ENCODE measurements at regions of chr20 and their contacts with region 1.

Region 1: GRCh38 chr20:58447511-58448391 is 58.7 kb downstream of the VAPB start:
- DNase-seq: peak; percentile 57
- H3K4me3 Mint-ChIP-seq: no peak overlapping the region
- H3K27ac Mint-ChIP-seq: no peak overlapping the region
- H3K4me1 Mint-ChIP-seq: peaks cover 2% of the 10 kb centered on the region
- H3K27me3 Mint-ChIP-seq: no peaks in the 10 kb centered on the region

Region 2: DNA sequence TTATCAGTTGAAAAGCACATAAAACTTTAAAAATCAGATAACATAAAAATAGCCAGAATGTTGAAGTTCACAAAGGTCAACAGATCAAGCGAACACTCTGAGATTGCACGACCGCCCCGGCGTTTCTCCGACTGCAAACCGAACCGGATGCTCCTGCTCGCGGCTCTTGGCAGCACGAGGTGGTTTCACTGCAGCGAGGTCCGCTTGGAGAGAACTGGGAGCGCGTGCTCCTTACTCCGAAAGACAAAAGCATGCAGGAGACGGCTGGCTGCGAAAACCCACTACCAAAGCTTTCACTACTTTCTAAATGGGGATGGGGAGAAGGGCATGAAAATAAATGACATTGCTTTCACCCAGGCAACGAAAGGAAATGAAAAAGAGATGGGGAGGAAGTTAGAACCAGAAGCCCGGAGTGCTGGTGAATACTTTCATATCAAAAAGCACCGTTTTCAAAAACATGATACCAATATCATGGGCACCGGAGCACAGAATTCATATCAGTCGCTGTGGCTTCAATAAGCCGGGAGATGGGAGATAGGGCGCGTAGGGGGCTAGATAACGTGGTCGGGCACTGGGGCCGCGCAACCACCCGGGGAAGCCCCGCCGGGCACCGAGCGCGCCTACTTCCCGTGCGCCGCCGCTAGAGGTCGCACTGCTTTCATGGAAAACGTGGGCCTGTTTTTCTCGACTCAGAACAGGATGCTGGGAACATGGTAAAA is 211.0 kb before region 1 on chr20:
- CTCF ChIA-PET with region 1: interaction called, 10 read pairs
- POLR2A ChIA-PET with region 1: interaction called, 4 read pairs
- DNase-seq: peak; percentile 84
- H3K4me3 Mint-ChIP-seq: peak overlapping the region; percentile 79
- H3K27ac Mint-ChIP-seq: peak overlapping the region; percentile 63
- H3K4me1 Mint-ChIP-seq: peaks cover 30% of the 10 kb centered on the region
- H3K27me3 Mint-ChIP-seq: peaks cover 4% of the 10 kb centered on the region

Region 3: DNA sequence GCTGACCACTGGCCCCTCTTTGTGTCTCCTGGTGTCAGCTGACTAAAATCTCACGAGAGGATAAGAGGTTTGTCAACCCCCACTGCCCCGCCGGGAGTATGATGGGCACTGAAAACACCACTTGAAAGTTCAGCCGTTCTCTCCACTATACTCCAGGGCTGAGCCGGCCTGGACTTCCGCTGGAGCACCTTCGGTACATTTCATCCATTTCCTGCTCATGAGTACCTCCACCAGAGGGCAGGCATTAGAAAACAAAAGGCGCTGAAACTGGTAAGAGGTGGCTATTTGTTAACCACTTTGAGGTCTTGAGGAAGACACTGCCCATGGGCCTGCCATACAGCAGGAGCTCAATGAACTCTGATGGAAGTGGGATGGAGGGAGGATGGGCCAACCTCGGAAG is 201.4 kb before region 1 on chr20:
- CTCF ChIA-PET with region 1: interaction called, 10 read pairs
- POLR2A ChIA-PET with region 1: no interaction called
- DNase-seq: no peak
- H3K4me3 Mint-ChIP-seq: no peak overlapping the region
- H3K27ac Mint-ChIP-seq: no peak overlapping the region
- H3K4me1 Mint-ChIP-seq: no peaks in the 10 kb centered on the region
- H3K27me3 Mint-ChIP-seq: no peaks in the 10 kb centered on the region

Region 4: GRCh38 chr20:58463256-58463655 is 15.5 kb after region 1 on chr20:
- CTCF ChIA-PET with region 1: no interaction called
- POLR2A ChIA-PET with region 1: no interaction called
- DNase-seq: no peak
- H3K4me3 Mint-ChIP-seq: no peak overlapping the region
- H3K27ac Mint-ChIP-seq: no peak overlapping the region
- H3K4me1 Mint-ChIP-seq: no peaks in the 10 kb centered on the region
- H3K27me3 Mint-ChIP-seq: peaks cover 4% of the 10 kb centered on the region

Measured in activated CD4-positive, alpha-beta memory T cell treated with anti-CD3 and anti-CD28 coated beads, Interleukin-2, amount 10 ng/mL, durations not matched to agents 7 days and 5 days (primary cell).